Activated CD4-positive, alpha-beta T cell treated with anti-CD3 and anti-CD28 coated beads, Interleukin-2, amount 10 ng/mL, durations not matched to agents 7 days and 5 days (primary cell): ENCODE measurements at regions of chr14 and their contacts with region 1.

Region 1: DNA sequence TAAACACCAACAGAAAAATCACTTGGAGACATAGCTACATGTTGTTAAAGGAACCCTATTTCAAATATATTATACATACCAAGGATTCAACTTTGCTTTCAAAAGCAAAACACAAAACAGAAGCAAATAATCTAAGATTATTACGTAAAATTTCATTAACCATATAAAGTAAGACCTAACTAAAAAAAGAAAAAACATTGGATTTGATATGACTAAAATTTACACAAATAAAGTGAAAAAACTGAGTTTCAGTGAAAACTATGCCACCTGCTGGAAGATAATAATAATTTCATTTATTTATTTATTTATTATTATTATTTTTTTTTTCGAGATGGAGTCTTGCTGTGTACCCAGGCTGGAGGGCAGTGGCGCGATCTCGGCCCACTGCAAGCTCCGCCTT is 45.2 kb downstream of the WDHD1 start:
- DNase-seq: no peak
- H3K4me3 Mint-ChIP-seq: no peak overlapping the region
- H3K27ac Mint-ChIP-seq: no peak overlapping the region
- H3K4me1 Mint-ChIP-seq: peaks cover 5% of the 10 kb centered on the region
- H3K27me3 Mint-ChIP-seq: no peaks in the 10 kb centered on the region

Region 2: DNA sequence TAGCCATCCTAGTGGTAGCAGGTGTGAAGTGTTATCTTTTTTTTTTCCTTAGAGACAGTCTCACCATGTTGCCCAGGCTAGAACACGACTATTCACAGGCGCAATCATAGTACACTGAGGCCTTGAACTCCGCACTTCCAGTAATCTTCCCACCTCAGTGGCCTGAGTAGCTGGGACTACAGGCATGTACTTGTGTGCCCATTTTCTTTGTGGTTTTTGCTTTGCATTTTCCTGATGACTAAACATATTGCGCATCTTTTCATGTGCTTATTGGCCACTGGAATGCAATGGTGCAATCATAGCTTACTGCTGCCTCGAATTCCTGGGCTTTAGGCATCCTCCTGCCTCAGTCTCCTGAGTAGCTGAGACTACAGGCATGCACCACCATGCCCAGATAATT is 45.7 kb before region 1 on chr14:
- CTCF ChIA-PET with region 1: no interaction called
- POLR2A ChIA-PET with region 1: interaction called, 16 read pairs
- DNase-seq: no peak
- H3K4me3 Mint-ChIP-seq: no peak overlapping the region
- H3K27ac Mint-ChIP-seq: no peak overlapping the region
- H3K4me1 Mint-ChIP-seq: peaks cover 2% of the 10 kb centered on the region
- H3K27me3 Mint-ChIP-seq: no peaks in the 10 kb centered on the region